HepG2 (cell line): ENCODE measurements at regions of chr10 and their contacts with region 1.

Region 1: GRCh38 chr10:19325581-19325980 is 277.0 kb downstream of the MALRD1 start:
- DNase-seq: no peak
- ATAC-seq: no peak
- H3K4me3 ChIP-seq: no peak overlapping the region
- H3K27ac ChIP-seq: no peak overlapping the region
- H3K4me1 ChIP-seq: no peaks in the 10 kb centered on the region
- H3K27me3 ChIP-seq: no peaks in the 10 kb centered on the region
- CTCF ChIP-seq: no peak
- EP300 ChIP-seq: no peak
- POLR2A ChIP-seq: no peak
- RAD21 ChIP-seq: no peak

Region 2: DNA sequence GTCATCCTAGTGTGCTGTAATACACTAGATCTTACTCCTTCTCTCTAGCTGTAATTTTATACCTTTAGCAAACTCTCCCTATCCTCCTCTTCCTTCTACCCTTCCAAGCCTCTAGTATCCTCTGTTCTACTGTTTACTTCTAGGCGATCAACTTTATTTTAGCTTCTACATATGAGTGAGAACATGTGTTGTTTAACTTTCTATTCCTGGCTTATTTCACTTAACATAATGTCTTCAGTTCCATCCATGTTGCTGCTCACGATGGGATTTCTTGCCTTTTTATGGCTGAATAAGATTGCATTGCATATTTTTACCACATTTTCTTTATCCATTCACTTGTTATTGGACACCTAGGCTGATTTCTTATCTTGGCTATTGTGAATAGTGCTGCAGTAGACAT is 41.6 kb after region 1 on chr10:
- CTCF ChIA-PET with region 1: no interaction called
- POLR2A ChIA-PET with region 1: no interaction called
- in situ Hi-C with region 1: no loop called
- intact Hi-C with region 1: no loop called
- DNase-seq: no peak
- ATAC-seq: no peak
- H3K4me3 ChIP-seq: no peak overlapping the region
- H3K27ac ChIP-seq: no peak overlapping the region
- H3K4me1 ChIP-seq: no peaks in the 10 kb centered on the region
- H3K27me3 ChIP-seq: no peaks in the 10 kb centered on the region
- CTCF ChIP-seq: no peak
- EP300 ChIP-seq: no peak
- POLR2A ChIP-seq: no peak
- RAD21 ChIP-seq: no peak

Region 3: DNA sequence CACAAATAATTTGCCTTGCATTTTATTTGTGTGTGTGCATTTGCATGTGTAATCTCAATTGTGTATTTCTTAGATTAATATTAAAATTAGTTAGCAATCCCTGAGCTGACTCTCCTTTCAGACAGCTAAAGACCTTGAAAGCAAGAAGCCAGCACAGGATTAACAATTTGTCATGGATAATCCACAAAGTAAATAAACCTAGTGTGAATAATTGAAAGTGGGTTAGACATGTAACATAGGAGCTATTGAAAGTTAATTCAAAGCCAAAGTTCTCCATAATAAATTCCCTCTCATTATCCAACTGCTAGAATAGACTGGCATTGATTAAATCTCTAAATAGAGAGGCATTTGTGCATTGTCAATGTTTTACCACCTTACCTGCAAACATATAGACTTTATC is 816.7 kb after region 1 on chr10:
- CTCF ChIA-PET with region 1: no interaction called
- POLR2A ChIA-PET with region 1: no interaction called
- in situ Hi-C with region 1: no loop called
- intact Hi-C with region 1: loop called (anchors 5 kb)
- DNase-seq: no peak
- ATAC-seq: no peak
- H3K4me3 ChIP-seq: no peak overlapping the region
- H3K27ac ChIP-seq: no peak overlapping the region
- H3K4me1 ChIP-seq: no peaks in the 10 kb centered on the region
- H3K27me3 ChIP-seq: no peaks in the 10 kb centered on the region
- CTCF ChIP-seq: no peak
- EP300 ChIP-seq: no peak
- POLR2A ChIP-seq: no peak
- RAD21 ChIP-seq: no peak